ENCODE measurements at regions of chr16 and their contacts with region 1.

Region 1: GRCh38 chr16:46973207-46973995 is at the start of gene DNAJA2:
- DNase-seq: peak; percentile 90
- H3K4me3 ChIP-seq: peak within 1 kb of the TSS; percentile 87
- H3K27ac ChIP-seq: peak within 1 kb of the TSS; percentile 80
- H3K4me1 ChIP-seq: peaks cover 43% of the 10 kb centered on the region
- CTCF ChIP-seq: no peak
- total RNA-seq, gene DNAJA2: 40.8 and 43.3 TPM in 2 replicates

Region 2: GRCh38 chr16:46607529-46607928 is 365.9 kb before region 1 on chr16:
- CTCF ChIA-PET with region 1: no interaction called
- POLR2A ChIA-PET with region 1: no interaction called
- intact Hi-C with region 1: loop called (anchors 5 kb)
- DNase-seq: peak; percentile 48
- H3K4me3 ChIP-seq: no peak overlapping the region
- H3K27ac ChIP-seq: no peak overlapping the region
- H3K4me1 ChIP-seq: peaks cover 9% of the 10 kb centered on the region
- CTCF ChIP-seq: peak; percentile 76

Region 3: DNA sequence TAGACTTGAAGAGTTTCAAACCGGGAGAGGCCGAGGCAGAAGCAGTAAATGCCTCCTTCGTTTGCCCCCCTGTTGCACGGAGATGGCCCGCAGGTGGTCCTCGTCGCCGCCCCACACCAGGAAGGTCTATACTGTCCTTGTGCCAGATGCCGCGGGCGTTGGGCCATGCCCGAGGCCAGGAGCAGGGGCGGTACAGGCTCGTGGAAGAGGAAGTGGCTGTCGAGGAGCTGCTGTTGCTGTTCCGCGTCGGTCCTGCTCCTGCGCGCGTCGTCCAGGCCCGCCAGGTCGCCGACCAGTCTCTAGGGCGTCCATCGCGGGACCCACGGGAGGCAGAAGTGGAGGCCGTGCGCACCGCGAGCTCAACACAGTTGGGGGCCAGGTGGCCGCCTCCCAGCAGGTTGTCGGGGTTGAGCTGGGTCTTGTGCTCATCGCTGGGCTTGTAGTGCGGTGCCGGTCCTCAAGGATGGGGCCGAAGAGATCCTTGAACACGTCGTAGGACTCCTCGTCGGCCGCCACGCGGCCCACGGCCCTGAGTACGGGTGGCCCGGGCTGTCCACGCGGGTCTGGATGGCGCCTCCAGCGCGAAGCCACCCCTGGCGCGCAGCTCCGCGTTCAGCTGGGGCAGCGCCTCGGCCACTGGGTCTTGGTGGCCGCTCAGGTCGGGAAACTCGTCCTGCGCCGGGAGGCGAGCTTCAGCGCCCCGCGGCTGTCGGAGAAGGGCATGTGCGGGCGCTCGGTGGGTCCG is 129.3 kb before region 1 on chr16:
- CTCF ChIA-PET with region 1: no interaction called
- POLR2A ChIA-PET with region 1: no interaction called
- intact Hi-C with region 1: no loop called
- DNase-seq: no peak
- H3K4me3 ChIP-seq: no peak overlapping the region
- H3K27ac ChIP-seq: no peak overlapping the region
- H3K4me1 ChIP-seq: no peaks in the 10 kb centered on the region
- CTCF ChIP-seq: no peak

Region 4: GRCh38 chr16:46961373-46962353 is 11.7 kb before region 1 on chr16:
- CTCF ChIA-PET with region 1: no interaction called
- POLR2A ChIA-PET with region 1: interaction called, 11 read pairs
- intact Hi-C with region 1: no loop called
- DNase-seq: no peak
- H3K4me3 ChIP-seq: no peak overlapping the region
- H3K27ac ChIP-seq: no peak overlapping the region
- H3K4me1 ChIP-seq: no peaks in the 10 kb centered on the region
- CTCF ChIP-seq: no peak

Region 5: GRCh38 chr16:47018223-47018891 is 45.0 kb after region 1 on chr16:
- CTCF ChIA-PET with region 1: interaction called, 4 read pairs
- POLR2A ChIA-PET with region 1: interaction called, 3 read pairs
- intact Hi-C with region 1: loop called (anchors 2 kb)
- DNase-seq: peak; percentile 80
- H3K4me3 ChIP-seq: no peak overlapping the region
- H3K27ac ChIP-seq: no peak overlapping the region
- H3K4me1 ChIP-seq: peaks cover 5% of the 10 kb centered on the region
- CTCF ChIP-seq: peak; percentile 75

Region 6: GRCh38 chr16:47037746-47038458 is 64.5 kb after region 1 on chr16:
- CTCF ChIA-PET with region 1: no interaction called
- POLR2A ChIA-PET with region 1: interaction called, 3 read pairs
- intact Hi-C with region 1: loop called (anchors 5 kb)
- DNase-seq: peak; percentile 88
- H3K4me3 ChIP-seq: peak overlapping the region; percentile 73
- H3K27ac ChIP-seq: no peak overlapping the region
- H3K4me1 ChIP-seq: peaks cover 25% of the 10 kb centered on the region
- CTCF ChIP-seq: peak; percentile 87

Measured in OCI-LY7 (cell line).